ENCODE measurements at regions of chr7 and their contacts with region 1.

Region 1: DNA sequence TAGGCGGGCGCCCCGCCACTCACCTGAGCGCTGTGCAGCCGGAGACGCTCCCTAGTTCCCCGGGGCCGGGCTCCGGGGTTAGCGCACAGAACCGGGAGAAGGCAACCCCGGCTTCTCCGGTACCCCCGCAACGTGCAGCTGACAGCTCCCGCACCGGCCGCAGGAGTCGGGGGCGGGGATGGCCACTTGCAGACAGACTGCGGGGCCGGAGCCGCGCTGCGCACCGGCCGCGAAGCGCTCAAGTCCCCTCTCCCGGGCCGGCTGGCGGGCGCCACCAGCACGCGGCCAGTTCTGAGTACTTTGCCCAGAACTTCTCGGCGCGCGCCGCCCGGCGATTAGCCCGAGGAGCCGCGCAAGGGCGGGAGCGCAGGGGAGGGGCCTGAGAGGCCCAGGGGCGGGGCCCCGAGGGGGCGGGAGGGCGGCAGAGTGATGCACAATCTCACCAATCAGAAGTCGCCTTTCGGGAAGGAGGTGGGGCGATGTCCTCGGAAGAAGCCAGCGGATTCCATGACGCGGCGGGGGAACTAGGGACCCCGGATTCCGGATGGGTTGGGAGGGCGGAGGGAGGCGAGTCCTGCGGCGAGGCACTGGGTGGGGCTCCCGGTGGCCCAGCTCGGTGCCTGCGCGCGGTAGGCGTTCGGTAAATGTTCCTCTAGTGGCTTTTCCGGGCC is at the start of gene OSBPL3:
- DNase-seq: peak; percentile 79 to 94
- ATAC-seq: peak; percentile 78 to 89
- H3K4me3 ChIP-seq: peak within 1 kb of the TSS; percentile 75
- H3K27ac ChIP-seq: peak within 1 kb of the TSS; percentile 81 to 90
- H3K4me1 ChIP-seq: peaks cover 15% of the 10 kb centered on the region; the same call in 2 of the 3 replicates
- CTCF ChIP-seq: no peak
- EP300 ChIP-seq: no peak
- POLR2A ChIP-seq: peak; percentile 57
- RAD21 ChIP-seq: peak; percentile 2 to 3; a peak in 1 of 5 replicates
- polyA plus RNA-seq, gene OSBPL3: 17.4 and 17.8 TPM in 2 replicates

Region 2: GRCh38 chr7:24732646-24733413 is 247.2 kb before region 1 on chr7:
- CTCF ChIA-PET with region 1: no interaction called
- POLR2A ChIA-PET with region 1: no interaction called
- DNase-seq: peak in 1 of 2 experiments; percentile 71
- ATAC-seq: peak; percentile 89
- H3K4me3 ChIP-seq: no peak overlapping the region
- H3K27ac ChIP-seq: peak overlapping the region; percentile 86 to 89
- H3K4me1 ChIP-seq: peaks cover 42% of the 10 kb centered on the region
- CTCF ChIP-seq: no peak
- EP300 ChIP-seq: no peak
- POLR2A ChIP-seq: no peak
- RAD21 ChIP-seq: no peak

Region 3: GRCh38 chr7:24819916-24820689 is 159.9 kb before region 1 on chr7:
- CTCF ChIA-PET with region 1: interaction called, 76 read pairs
- POLR2A ChIA-PET with region 1: interaction called, 32 read pairs
- DNase-seq: peak; percentile 81 to 91
- ATAC-seq: peak; percentile 86 to 87
- H3K4me3 ChIP-seq: peak overlapping the region; percentile 26; the same call in 2 of the 3 replicates
- H3K27ac ChIP-seq: peak overlapping the region; percentile 87 to 88
- H3K4me1 ChIP-seq: peaks cover 44% of the 10 kb centered on the region
- CTCF ChIP-seq: peak; percentile 94
- EP300 ChIP-seq: no peak
- POLR2A ChIP-seq: no peak
- RAD21 ChIP-seq: peak; percentile 93 to 94

Region 4: GRCh38 chr7:24877790-24878311 is 102.1 kb before region 1 on chr7:
- CTCF ChIA-PET with region 1: interaction called, 17 read pairs
- POLR2A ChIA-PET with region 1: no interaction called
- DNase-seq: no peak
- ATAC-seq: no peak
- H3K4me3 ChIP-seq: no peak overlapping the region
- H3K27ac ChIP-seq: no peak overlapping the region
- H3K4me1 ChIP-seq: peaks cover 10% of the 10 kb centered on the region
- CTCF ChIP-seq: no peak
- EP300 ChIP-seq: no peak
- POLR2A ChIP-seq: no peak
- RAD21 ChIP-seq: no peak

Region 5: DNA sequence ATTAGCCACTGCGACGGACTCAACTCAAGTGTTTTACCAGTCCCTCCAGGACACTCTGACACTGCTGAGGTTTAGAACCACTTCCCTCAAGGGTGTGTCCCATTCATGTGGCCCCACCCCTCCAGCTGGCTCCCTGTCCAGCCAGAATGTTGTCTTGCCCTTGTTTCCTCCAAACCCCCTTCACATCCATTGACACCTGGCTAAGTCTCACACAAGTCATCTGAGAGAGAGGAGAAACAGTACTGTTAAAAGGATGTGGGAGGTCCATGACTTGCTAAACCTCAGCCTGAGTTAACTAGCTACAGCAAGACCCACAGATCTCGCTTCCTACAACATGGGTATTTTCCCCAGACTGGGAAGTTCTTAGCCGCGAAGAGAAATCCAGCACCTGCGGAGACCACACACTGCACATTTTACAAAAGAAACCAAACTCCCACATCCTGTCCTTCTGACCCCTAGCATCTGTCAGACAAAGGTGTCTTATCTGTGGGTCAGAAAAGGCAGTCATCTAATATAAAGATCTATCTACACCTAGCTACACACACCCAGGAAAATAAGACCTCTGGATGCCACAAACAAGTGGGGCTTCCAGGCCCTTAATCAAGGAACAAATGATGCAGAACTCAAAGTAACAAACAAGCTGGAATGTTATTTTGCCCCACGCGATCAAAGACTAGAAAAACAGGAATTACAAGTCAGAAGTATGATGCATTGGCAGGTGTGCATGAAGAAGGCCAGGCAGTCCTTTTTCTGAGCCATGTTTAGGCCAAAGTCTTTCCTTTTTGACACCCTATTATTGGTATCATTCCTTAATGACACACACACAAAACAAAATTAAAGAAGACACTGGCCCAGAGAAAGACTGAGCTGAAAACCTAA is 13.9 kb before region 1 on chr7:
- CTCF ChIA-PET with region 1: interaction called, 26 read pairs
- POLR2A ChIA-PET with region 1: interaction called, 3 read pairs
- DNase-seq: no peak
- ATAC-seq: peak in 1 of 2 experiments; percentile 33; a peak in 1 of 6 replicates
- H3K4me3 ChIP-seq: no peak overlapping the region
- H3K27ac ChIP-seq: no peak overlapping the region
- H3K4me1 ChIP-seq: peaks cover 12% of the 10 kb centered on the region
- CTCF ChIP-seq: no peak
- EP300 ChIP-seq: no peak
- POLR2A ChIP-seq: no peak
- RAD21 ChIP-seq: no peak

Region 6: DNA sequence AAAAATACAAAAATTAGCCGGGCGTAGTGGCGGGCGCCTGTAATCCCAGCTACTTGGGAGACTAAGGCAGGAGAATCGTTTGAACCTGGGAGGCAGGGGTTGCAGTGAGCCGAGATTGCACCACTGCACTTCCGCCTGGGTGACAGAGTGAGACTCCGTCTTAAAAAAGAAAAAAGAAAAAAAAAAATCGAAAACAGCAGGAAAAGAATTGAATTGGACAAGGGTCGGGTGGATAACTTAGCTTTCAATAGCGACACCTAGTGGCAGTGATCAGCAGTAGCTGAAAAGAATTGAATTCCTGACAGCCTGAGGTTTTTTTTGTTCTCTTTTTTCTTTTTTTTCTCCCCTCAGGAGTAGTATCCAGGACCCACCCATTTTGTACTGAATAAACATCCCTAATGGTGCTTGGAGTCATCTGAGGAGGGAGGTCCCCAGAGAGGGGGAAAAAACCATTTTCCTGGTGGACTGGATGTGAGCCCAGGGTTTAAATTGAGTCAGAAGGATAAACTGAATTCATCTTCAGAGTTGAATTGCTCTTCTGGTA is 90.0 kb after region 1 on chr7:
- CTCF ChIA-PET with region 1: interaction called, 28 read pairs
- POLR2A ChIA-PET with region 1: no interaction called
- DNase-seq: peak; percentile 82 to 84
- ATAC-seq: peak; percentile 81 to 87
- H3K4me3 ChIP-seq: peak overlapping the region; percentile 41
- H3K27ac ChIP-seq: peak overlapping the region; percentile 63 to 84
- H3K4me1 ChIP-seq: peaks cover 21% of the 10 kb centered on the region
- CTCF ChIP-seq: peak; percentile 95
- EP300 ChIP-seq: no peak
- POLR2A ChIP-seq: no peak
- RAD21 ChIP-seq: peak; percentile 85 to 89

Measured in A549 (cell line).